ENCODE measurements at regions of chr12 and their contacts with region 1.

Region 1: GRCh38 chr12:115060477-115061168 is 376.6 kb upstream of the TBX3 start:
- DNase-seq: no peak
- H3K4me3 ChIP-seq: no peak overlapping the region
- H3K27ac ChIP-seq: no peak overlapping the region
- H3K4me1 ChIP-seq: no peaks in the 10 kb centered on the region
- H3K27me3 ChIP-seq: no peaks in the 10 kb centered on the region
- CTCF ChIP-seq: no peak

Region 2: GRCh38 chr12:114995891-114996290 is 64.7 kb before region 1 on chr12:
- CTCF ChIA-PET with region 1: no interaction called
- dilution Hi-C with region 1: no loop called
- in situ Hi-C with region 1: no loop called
- intact Hi-C with region 1: no loop called
- DNase-seq: peak; percentile 41
- H3K4me3 ChIP-seq: no peak overlapping the region
- H3K27ac ChIP-seq: no peak overlapping the region
- H3K4me1 ChIP-seq: peaks cover 7% of the 10 kb centered on the region
- H3K27me3 ChIP-seq: no peaks in the 10 kb centered on the region
- CTCF ChIP-seq: no peak

Region 3: GRCh38 chr12:115017346-115017745 is 43.3 kb before region 1 on chr12:
- CTCF ChIA-PET with region 1: no interaction called
- dilution Hi-C with region 1: loop called (anchors 5 kb)
- in situ Hi-C with region 1: no loop called
- intact Hi-C with region 1: no loop called
- DNase-seq: no peak
- H3K4me3 ChIP-seq: no peak overlapping the region
- H3K27ac ChIP-seq: no peak overlapping the region
- H3K4me1 ChIP-seq: no peaks in the 10 kb centered on the region
- H3K27me3 ChIP-seq: no peaks in the 10 kb centered on the region
- CTCF ChIP-seq: no peak

Region 4: DNA sequence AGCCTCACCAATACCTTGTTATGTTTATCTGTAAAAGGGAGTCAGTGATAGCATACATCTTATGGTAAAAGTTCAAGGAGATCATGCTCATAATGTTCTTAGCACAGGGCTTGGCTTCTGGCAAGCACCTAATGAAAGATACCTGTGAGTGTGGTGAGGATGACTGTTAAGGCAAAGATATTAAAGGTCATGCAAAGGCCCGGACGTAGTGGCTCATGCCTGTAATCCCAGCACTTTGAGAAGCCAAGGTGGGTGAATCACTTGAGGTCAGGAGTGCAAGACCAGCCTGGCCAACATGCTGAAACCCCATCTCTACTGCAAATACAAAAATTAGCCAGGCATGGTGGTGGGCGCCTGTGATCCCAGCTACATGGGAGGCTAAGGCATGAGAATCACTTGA is 49.2 kb after region 1 on chr12:
- CTCF ChIA-PET with region 1: no interaction called
- dilution Hi-C with region 1: loop called (anchors 5 kb)
- in situ Hi-C with region 1: no loop called
- intact Hi-C with region 1: no loop called
- DNase-seq: peak; percentile 8
- H3K4me3 ChIP-seq: no peak overlapping the region
- H3K27ac ChIP-seq: no peak overlapping the region
- H3K4me1 ChIP-seq: no peaks in the 10 kb centered on the region
- H3K27me3 ChIP-seq: no peaks in the 10 kb centered on the region
- CTCF ChIP-seq: no peak

Region 5: GRCh38 chr12:115227137-115227615 is 166.6 kb after region 1 on chr12:
- CTCF ChIA-PET with region 1: no interaction called
- dilution Hi-C with region 1: no loop called
- in situ Hi-C with region 1: no loop called
- intact Hi-C with region 1: no loop called
- DNase-seq: peak; percentile 91
- H3K4me3 ChIP-seq: no peak overlapping the region
- H3K27ac ChIP-seq: no peak overlapping the region
- H3K4me1 ChIP-seq: peaks cover 12% of the 10 kb centered on the region
- H3K27me3 ChIP-seq: no peaks in the 10 kb centered on the region
- CTCF ChIP-seq: no peak

Region 6: DNA sequence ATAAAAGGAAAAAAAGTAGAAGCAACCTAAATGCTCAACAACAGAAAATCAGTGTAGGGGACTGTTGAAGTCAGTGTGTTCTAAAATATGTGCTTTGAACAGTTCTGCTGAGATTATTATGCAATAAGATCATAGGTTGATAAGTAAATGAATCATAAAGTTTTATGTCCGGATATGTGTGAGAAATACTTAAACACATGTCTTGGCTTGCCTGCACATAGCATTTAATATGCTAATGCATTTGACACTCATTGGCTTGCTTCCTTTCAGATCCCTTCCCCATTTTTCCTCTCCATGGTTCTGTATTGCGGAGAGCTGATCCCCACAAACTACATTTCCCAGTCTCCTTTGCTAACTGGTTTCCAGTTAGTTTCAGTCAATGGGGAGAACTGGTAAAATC is 197.2 kb after region 1 on chr12:
- CTCF ChIA-PET with region 1: no interaction called
- dilution Hi-C with region 1: no loop called
- in situ Hi-C with region 1: no loop called
- intact Hi-C with region 1: no loop called
- DNase-seq: peak; percentile 94
- H3K4me3 ChIP-seq: no peak overlapping the region
- H3K27ac ChIP-seq: no peak overlapping the region
- H3K4me1 ChIP-seq: peaks cover 22% of the 10 kb centered on the region
- H3K27me3 ChIP-seq: no peaks in the 10 kb centered on the region
- CTCF ChIP-seq: no peak